ENCODE measurements at regions of chr3 and their contacts with region 1.

Region 1: GRCh38 chr3:58317811-58318210 is 11.5 kb downstream of the HTD2 start:
- H3K4me3 ChIP-seq: no peak overlapping the region
- H3K27ac ChIP-seq: no peak overlapping the region
- H3K4me1 ChIP-seq: no peaks in the 10 kb centered on the region
- CTCF ChIP-seq: no peak

Region 2: GRCh38 chr3:58305882-58306711 is 11.7 kb before region 1 on chr3 and contains the starts of genes HTD2 and RPP14:
- CTCF ChIA-PET with region 1: interaction called, 16 read pairs
- POLR2A ChIA-PET with region 1: no interaction called
- H3K4me3 ChIP-seq: peak within 1 kb of the TSS; percentile 90
- H3K27ac ChIP-seq: peak within 1 kb of the TSS; percentile 76
- H3K4me1 ChIP-seq: no peaks in the 10 kb centered on the region
- CTCF ChIP-seq: peak; percentile 86; the same call in 1 of the 2 replicates

Measured in HEK293 (cell line).